Activated T-helper 1 cell treated with anti-CD3 and anti-CD28 coated beads, Interleukin-12 subunit alpha, Interleukin-12 subunit beta, Interleukin-2, Interleukin-4 antibody, amounts not matched to agents 30 ng/mL and 10 ng/mL and 1 ng/mL, durations not matched to agents 14 hours and 24 hours and 36 hours (primary cell): ENCODE measurements at regions of chr1 and their contacts with region 1.

Region 1: GRCh38 chr1:37595440-37596319 is at the start of gene GNL2:
- DNase-seq: peak; percentile 97
- H3K4me3 Mint-ChIP-seq: peak within 1 kb of the TSS; percentile 96
- H3K27ac Mint-ChIP-seq: peak within 1 kb of the TSS; percentile 90
- H3K4me1 Mint-ChIP-seq: peaks cover 20% of the 10 kb centered on the region
- H3K27me3 Mint-ChIP-seq: peaks cover 4% of the 10 kb centered on the region
- total RNA-seq, gene GNL2: 108 and 113 TPM in 2 replicates

Region 2: DNA sequence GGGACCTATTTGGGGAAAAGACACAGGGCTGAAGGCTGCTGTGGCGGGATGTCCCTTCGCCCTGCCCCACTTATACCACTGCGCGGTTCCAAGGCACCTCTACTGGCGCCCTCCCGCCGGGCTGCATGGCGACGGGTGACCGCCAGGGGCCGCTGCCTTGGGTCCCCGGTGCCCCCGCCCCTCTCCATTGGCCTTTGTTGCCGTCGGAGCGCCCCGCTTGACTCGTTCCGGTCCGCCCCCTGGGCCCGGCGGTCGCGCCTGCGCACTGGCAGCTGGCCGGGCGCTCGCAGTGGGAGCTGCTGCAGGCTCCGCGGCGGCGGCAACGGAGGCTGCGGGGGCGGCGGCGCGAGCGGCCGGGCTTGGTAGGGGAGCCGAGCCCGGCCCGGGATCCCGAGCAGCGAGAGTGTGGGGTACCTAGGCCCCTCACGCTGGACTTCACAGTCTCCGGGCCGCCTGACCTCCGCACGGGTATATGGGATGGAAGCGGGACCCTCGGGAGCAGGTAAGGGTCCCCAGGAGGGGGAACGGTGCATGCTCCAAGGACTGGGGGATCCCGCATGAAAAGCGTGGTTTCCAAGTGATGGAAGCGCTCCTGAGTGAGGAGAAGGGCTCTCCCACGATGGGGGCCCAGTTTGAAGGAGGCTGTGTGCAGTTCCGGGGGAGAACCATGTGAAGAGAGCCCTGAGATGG is 1712.6 kb before region 1 on chr1 and contains the start of gene AGO1:
- intact Hi-C with region 1: loop called (anchors 5 kb)
- DNase-seq: peak; percentile 97
- H3K4me3 Mint-ChIP-seq: peak within 1 kb of the TSS; percentile 95
- H3K27ac Mint-ChIP-seq: peak within 1 kb of the TSS; percentile 64
- H3K4me1 Mint-ChIP-seq: peaks cover 48% of the 10 kb centered on the region
- H3K27me3 Mint-ChIP-seq: peaks cover 6% of the 10 kb centered on the region
- total RNA-seq, gene AGO1: 39.0 and 39.5 TPM in 2 replicates

Region 3: GRCh38 chr1:37501661-37502060 is 94.0 kb before region 1 on chr1:
- intact Hi-C with region 1: no loop called
- DNase-seq: no peak
- H3K4me3 Mint-ChIP-seq: no peak overlapping the region
- H3K27ac Mint-ChIP-seq: no peak overlapping the region
- H3K4me1 Mint-ChIP-seq: no peaks in the 10 kb centered on the region
- H3K27me3 Mint-ChIP-seq: no peaks in the 10 kb centered on the region

Region 4: DNA sequence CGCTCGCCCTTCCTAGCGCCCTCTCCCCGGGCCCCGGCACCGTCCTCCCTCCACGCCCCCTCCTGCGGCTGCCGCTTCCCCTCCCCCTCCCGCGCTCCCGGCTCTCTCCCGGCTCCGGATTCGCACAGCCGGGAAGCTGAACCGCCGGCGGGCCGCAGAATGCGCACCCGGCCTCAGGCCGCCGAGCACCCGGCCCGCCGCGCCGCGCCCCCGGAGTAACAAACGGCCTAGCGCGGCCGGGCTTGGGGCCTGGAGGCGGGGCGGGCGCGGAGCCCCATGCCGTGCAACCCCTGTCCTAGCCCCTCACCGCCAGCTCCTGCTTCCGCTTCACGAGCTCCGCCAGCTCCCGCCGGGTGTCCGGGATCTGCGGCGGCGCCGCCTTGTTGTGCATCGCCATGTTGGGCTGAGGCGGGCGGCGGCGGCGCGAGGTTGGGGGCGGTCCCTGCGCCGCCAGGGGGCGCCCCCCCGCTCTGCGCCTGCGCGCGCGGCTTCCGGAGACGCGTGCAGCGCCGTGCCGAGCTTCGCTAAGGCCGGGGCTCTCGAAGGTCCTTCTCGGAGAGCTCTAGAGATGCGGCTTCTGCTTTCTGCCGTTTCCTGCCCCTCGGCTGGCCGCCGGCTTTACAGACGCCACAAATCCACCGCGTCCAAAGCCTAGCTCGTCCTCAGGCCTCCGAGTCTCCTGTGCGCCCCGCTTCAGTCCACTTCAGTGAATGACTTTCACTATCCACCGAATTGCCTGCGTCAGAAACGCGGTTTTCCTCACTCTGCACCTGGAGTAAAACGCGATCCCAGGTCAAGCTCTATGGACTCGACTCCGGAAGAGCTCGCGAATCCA is 81.1 kb before region 1 on chr1 and contains the start of gene MEAF6:
- intact Hi-C with region 1: loop called (anchors 1 kb)
- DNase-seq: peak; percentile 84
- H3K4me3 Mint-ChIP-seq: peak within 1 kb of the TSS; percentile 96
- H3K27ac Mint-ChIP-seq: peak within 1 kb of the TSS; percentile 96
- H3K4me1 Mint-ChIP-seq: peaks cover 45% of the 10 kb centered on the region
- H3K27me3 Mint-ChIP-seq: no peaks in the 10 kb centered on the region
- total RNA-seq, gene MEAF6: 102 and 103 TPM in 2 replicates

Region 5: GRCh38 chr1:37561133-37562132 is 34.2 kb before region 1 on chr1:
- intact Hi-C with region 1: no loop called
- DNase-seq: no peak
- H3K4me3 Mint-ChIP-seq: no peak overlapping the region
- H3K27ac Mint-ChIP-seq: no peak overlapping the region
- H3K4me1 Mint-ChIP-seq: peaks cover 18% of the 10 kb centered on the region
- H3K27me3 Mint-ChIP-seq: no peaks in the 10 kb centered on the region

Region 6: DNA sequence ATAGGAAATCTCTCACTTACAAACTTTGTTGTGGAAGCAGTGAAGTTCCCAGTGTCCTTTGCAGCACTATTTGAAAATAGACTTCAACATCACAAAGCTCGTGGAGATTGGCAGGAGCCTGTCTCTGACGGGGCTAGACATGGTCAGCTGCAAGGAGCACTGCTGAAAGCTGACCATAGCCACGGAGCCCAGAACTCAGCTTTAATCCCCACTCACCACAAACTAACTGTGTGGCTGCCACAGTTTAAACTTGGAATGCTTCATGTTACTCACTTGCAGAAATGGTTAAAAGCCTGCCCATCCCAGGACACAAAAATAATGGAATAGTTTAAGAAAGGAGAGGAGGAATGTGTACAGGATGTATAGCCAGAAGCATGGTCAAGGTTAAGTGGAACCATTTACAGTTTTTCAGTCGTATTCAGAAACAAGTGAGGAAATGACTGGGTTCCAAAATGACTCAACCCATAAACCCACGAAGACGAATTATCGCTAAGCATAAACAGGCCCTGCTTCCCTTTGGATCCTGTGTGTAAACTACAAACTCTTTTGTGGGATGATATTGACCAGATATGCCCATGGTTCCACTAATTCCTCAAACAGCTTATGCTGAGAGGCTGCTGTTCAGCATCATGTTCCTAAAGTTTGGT is 20.7 kb before region 1 on chr1:
- intact Hi-C with region 1: loop called (anchors 2 kb)
- DNase-seq: no peak
- H3K4me3 Mint-ChIP-seq: peak overlapping the region; percentile 58
- H3K27ac Mint-ChIP-seq: peak overlapping the region; percentile 89
- H3K4me1 Mint-ChIP-seq: peaks cover 65% of the 10 kb centered on the region
- H3K27me3 Mint-ChIP-seq: no peaks in the 10 kb centered on the region

Region 7: GRCh38 chr1:37741130-37741529 is 145.4 kb after region 1 on chr1:
- intact Hi-C with region 1: no loop called
- DNase-seq: no peak
- H3K4me3 Mint-ChIP-seq: no peak overlapping the region
- H3K27ac Mint-ChIP-seq: no peak overlapping the region
- H3K4me1 Mint-ChIP-seq: no peaks in the 10 kb centered on the region
- H3K27me3 Mint-ChIP-seq: peaks cover 6% of the 10 kb centered on the region

Region 8: GRCh38 chr1:37859507-37860345 is 264.0 kb after region 1 on chr1 and contains the start of gene MTF1:
- intact Hi-C with region 1: loop called (anchors 1 kb)
- DNase-seq: peak; percentile 96
- H3K4me3 Mint-ChIP-seq: peak within 1 kb of the TSS; percentile 95
- H3K27ac Mint-ChIP-seq: peak within 1 kb of the TSS; percentile 99
- H3K4me1 Mint-ChIP-seq: peaks cover 31% of the 10 kb centered on the region
- H3K27me3 Mint-ChIP-seq: no peaks in the 10 kb centered on the region
- total RNA-seq, gene MTF1: 31.7 and 35.3 TPM in 2 replicates

Region 9: DNA sequence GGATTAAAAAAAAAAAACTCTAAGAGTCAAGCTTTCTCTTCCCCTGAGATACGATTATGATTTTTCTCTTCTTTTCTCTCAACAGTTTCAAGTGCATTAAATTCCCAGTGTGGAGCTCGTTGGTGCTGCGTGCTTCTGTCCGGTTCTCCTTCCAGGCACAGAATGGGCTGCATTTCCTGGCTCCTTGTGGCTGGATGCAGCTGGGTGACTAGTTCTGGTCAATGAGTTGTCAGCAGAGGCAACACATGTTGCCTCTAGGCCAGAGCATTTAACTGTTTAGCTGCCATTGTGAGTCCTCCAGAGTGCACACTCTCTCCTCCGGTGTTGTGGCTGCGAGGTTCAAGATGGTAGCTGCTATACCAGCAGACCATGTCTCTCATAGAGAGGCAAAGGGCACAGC is 951.0 kb after region 1 on chr1:
- intact Hi-C with region 1: no loop called
- DNase-seq: no peak
- H3K4me3 Mint-ChIP-seq: no peak overlapping the region
- H3K27ac Mint-ChIP-seq: no peak overlapping the region
- H3K4me1 Mint-ChIP-seq: no peaks in the 10 kb centered on the region
- H3K27me3 Mint-ChIP-seq: peaks cover 29% of the 10 kb centered on the region